WTC11 (cell line): ENCODE measurements at regions of chr4 and their contacts with region 1.

Region 1: DNA sequence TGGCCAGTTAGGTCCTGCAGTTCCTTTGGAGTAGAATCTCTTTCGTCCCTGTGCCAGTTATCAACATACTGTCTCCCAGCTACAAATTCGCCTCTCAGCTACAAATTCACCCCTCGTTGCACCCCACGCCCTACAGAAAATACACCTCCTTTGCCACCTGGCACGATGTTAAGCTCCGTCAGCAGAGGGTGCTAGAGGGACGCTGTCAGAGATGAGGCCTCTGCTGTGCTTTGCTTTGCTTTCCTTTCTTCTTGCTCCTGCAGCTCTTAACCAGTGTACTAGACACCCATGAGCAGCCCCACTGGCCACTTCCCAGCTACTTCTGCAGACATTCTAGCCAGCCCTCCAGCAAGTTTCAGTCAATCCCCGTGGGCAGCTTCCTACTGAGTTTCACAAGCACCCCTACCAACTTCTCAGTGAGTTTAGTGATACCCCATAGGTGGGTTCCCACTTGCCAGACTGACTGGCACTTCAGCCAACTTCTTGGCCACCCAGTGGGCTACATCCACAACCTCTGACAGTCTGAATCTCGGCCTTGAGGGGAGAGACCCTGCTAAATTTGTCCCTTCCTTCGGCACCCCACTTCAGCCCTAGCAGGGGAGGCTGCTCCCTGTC is 21.8 kb downstream of the HAUS3 start:
- DNase-seq: peak; percentile 86
- ATAC-seq: peak; percentile 67
- H3K4me3 Mint-ChIP-seq: no peak overlapping the region
- H3K27ac Mint-ChIP-seq: no peak overlapping the region
- H3K4me1 Mint-ChIP-seq: peaks cover 47% of the 10 kb centered on the region
- H3K27me3 Mint-ChIP-seq: peaks cover 87% of the 10 kb centered on the region
- CTCF ChIP-seq: peak; percentile 78

Region 2: GRCh38 chr4:2262143-2262943 is 42.2 kb after region 1 on chr4:
- CTCF ChIA-PET with region 1: interaction called, 19 read pairs
- POLR2A ChIA-PET with region 1: no interaction called
- DNase-seq: peak; percentile 98
- ATAC-seq: peak; percentile 93
- H3K4me3 Mint-ChIP-seq: peak overlapping the region; percentile 62
- H3K27ac Mint-ChIP-seq: no peak overlapping the region
- H3K4me1 Mint-ChIP-seq: no peaks in the 10 kb centered on the region
- H3K27me3 Mint-ChIP-seq: peaks cover 7% of the 10 kb centered on the region
- CTCF ChIP-seq: no peak

Region 3: DNA sequence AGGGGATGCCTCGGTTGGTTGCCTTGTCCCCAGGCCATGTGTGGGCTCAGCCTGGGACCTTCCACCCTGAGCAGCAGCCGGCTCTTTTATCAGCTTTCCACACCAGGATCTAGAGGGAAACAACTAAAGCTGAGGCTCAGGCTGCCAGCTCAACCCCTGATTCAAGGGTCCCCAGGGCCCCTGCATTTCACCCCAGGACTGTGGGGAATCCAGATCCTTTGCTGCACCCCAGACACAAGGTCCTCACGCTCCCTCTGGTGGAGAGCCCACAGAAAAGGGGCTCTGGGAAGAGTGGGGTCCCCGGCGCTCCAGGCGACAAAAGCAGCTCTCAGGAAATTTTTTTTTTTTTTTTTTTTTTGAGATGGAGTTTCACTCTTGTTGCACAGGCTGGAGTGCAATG is 134.0 kb after region 1 on chr4:
- CTCF ChIA-PET with region 1: interaction called, 50 read pairs
- POLR2A ChIA-PET with region 1: no interaction called
- DNase-seq: peak; percentile 50
- ATAC-seq: peak; percentile 60
- H3K4me3 Mint-ChIP-seq: no peak overlapping the region
- H3K27ac Mint-ChIP-seq: no peak overlapping the region
- H3K4me1 Mint-ChIP-seq: peaks cover 2% of the 10 kb centered on the region; the same call in 1 of the 2 replicates
- H3K27me3 Mint-ChIP-seq: no peaks in the 10 kb centered on the region
- CTCF ChIP-seq: no peak

Region 4: DNA sequence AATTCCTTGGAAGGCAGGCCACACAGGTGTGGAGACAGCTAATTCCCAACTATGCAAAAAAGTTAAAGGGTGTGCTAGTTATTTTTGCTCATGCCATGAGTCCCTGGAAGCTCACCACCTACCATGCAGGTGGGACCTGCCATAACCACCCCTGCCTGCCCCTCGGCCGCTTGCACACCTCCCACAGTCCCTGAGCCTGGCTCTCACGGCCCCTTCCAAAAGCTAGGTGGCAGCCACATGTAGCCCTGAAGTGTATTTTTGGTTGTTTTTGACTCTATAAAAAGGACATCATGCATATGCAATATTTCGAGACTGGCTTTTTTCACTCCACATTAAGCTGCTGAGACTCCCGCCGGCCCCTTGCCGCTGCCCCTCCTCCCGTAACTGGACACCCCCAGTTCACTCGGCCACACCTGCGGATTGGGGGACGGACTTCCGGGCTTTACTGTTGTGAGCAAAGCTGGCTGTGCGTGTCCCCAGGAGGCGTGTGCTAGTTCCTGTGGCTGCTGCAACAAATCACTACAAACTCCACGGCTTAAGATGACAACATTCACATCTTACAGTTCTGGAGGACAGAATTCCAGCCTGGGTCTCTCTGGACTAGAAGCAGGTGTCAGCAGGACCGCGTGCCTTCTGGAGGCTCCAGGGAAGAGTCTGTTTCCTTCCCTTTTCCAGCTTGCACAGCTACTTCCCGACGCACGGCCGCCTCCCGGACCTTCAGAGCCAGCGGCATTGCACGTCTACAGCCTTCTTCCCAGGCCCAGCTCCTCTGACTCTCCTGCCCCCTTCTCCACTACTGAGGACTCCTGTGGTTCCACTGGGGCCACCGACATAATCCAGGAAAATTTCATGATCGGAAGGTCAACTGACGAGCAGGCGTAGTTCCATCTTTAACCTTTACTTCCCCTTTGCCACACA is 173.5 kb after region 1 on chr4:
- CTCF ChIA-PET with region 1: interaction called, 18 read pairs
- POLR2A ChIA-PET with region 1: interaction called, 6 read pairs
- DNase-seq: peak; percentile 76
- ATAC-seq: peak; percentile 91
- H3K4me3 Mint-ChIP-seq: peak overlapping the region; percentile 59
- H3K27ac Mint-ChIP-seq: peak overlapping the region; percentile 83
- H3K4me1 Mint-ChIP-seq: peaks cover 56% of the 10 kb centered on the region
- H3K27me3 Mint-ChIP-seq: no peaks in the 10 kb centered on the region; the same call in 1 of the 2 replicates
- CTCF ChIP-seq: no peak

Region 5: GRCh38 chr4:2418650-2419571 is 198.8 kb after region 1 on chr4 and contains the start of gene CFAP99:
- CTCF ChIA-PET with region 1: interaction called, 13 read pairs
- POLR2A ChIA-PET with region 1: no interaction called
- DNase-seq: peak; percentile 99
- ATAC-seq: peak; percentile 71
- H3K4me3 Mint-ChIP-seq: peak within 1 kb of the TSS; percentile 86
- H3K27ac Mint-ChIP-seq: no peak within 1 kb of the TSS
- H3K4me1 Mint-ChIP-seq: peaks cover 44% of the 10 kb centered on the region
- H3K27me3 Mint-ChIP-seq: peaks cover 78% of the 10 kb centered on the region
- CTCF ChIP-seq: no peak
- total RNA-seq, gene CFAP99: 0.23 to 0.41 TPM in 2 of 3 replicates, not detected in the other

Region 6: GRCh38 chr4:2441393-2442174 is 221.5 kb after region 1 on chr4:
- CTCF ChIA-PET with region 1: interaction called, 44 read pairs
- POLR2A ChIA-PET with region 1: no interaction called
- DNase-seq: peak; percentile 95
- ATAC-seq: peak; percentile 94
- H3K4me3 Mint-ChIP-seq: no peak overlapping the region
- H3K27ac Mint-ChIP-seq: no peak overlapping the region
- H3K4me1 Mint-ChIP-seq: peaks cover 2% of the 10 kb centered on the region; the same call in 1 of the 2 replicates
- H3K27me3 Mint-ChIP-seq: no peaks in the 10 kb centered on the region; the same call in 1 of the 2 replicates
- CTCF ChIP-seq: peak; percentile 73